Panc1 (cell line): ENCODE measurements at regions of chr5 and their contacts with region 1.

Region 1: GRCh38 chr5:173907686-173908371 is 19.7 kb downstream of the CPEB4 start:
- DNase-seq: no peak
- ATAC-seq: no peak
- H3K4me3 ChIP-seq: no peak overlapping the region
- H3K27ac ChIP-seq: no peak overlapping the region
- H3K4me1 ChIP-seq: no peaks in the 10 kb centered on the region
- H3K27me3 ChIP-seq: no peaks in the 10 kb centered on the region
- CTCF ChIP-seq: no peak

Region 2: DNA sequence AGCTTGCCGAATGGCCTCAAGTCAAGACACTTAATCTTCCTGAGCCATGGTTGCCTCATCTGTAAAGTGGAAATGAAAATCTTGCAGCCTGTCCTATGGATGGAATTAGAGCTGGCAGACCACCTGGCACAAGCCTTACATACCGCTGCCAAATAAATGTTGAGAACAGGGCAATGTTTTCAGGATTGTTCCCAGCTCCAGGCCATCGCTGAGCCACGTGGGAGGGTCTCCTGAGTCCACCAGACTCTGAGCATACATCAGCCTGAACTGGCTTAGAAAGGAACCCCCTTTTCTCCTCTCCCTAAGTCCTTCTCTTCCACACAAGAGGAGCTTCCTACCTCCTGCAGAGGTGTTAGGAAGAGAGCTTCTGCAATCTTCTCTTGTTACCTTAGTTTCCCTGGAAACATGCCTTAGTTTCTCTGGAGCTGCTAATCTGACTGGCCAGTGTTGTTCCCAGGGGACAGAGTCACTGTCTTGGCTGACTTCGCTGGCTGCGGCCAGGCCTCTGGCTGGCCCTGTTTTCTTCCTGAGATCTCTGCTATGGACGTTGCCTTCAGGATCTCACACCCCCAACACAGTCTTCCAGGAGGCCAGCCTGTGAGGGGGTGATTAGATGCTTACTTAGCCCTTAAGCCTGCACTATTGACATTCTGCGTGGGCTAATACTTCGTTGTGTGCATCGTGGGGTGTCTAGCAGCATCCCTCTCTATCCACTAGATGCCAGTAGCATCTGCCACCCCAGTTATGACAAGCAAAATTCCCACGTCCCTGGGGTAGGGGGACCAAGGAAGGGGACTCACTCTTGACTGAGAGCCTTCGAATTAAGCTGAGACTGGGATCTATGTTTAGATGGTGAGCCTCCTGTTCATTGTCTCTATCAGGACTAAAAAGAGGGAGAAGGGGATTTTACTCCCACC is 353.5 kb before region 1 on chr5:
- CTCF ChIA-PET with region 1: no interaction called
- POLR2A ChIA-PET with region 1: no interaction called
- in situ Hi-C with region 1: no loop called
- intact Hi-C with region 1: no loop called
- DNase-seq: no peak
- ATAC-seq: no peak
- H3K4me3 ChIP-seq: no peak overlapping the region
- H3K27ac ChIP-seq: no peak overlapping the region
- H3K4me1 ChIP-seq: no peaks in the 10 kb centered on the region
- H3K27me3 ChIP-seq: no peaks in the 10 kb centered on the region; the same call in 1 of the 2 replicates
- CTCF ChIP-seq: no peak

Region 3: DNA sequence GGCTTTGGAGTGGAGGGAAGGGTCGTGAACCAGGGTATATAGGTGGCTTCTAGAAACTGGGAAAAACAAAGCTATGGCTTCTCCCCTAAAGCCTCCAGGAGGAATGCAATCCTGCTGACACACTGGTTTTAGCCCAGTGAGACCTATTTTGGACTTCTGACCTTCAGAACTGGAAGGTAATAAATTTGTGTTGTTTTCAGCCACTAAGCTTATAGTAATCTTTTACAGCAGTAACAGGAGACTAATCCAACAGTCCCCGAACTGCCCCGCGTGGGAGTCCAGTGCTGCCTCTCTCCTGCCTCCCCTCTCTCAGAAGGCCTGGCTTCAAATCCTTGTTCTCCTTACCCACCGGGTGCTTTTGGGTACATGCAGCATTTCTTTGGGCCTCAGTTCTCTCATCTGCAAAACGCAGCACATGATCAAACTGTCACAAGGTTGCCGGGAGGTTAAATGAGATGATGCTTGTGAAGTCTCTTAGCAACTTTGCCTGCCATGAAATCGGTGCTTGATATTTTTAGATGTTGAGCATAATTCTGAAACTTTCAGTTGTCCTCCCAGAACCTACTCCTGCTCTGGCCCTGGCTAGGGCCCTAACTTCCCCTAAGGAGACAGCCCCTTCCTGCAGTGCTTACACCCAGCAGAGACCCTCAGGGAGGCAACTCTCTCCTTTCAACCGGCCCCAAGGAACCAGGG is 164.0 kb before region 1 on chr5:
- CTCF ChIA-PET with region 1: no interaction called
- POLR2A ChIA-PET with region 1: interaction called, 10 read pairs
- in situ Hi-C with region 1: no loop called
- intact Hi-C with region 1: no loop called
- DNase-seq: no peak
- ATAC-seq: no peak
- H3K4me3 ChIP-seq: no peak overlapping the region
- H3K27ac ChIP-seq: no peak overlapping the region
- H3K4me1 ChIP-seq: no peaks in the 10 kb centered on the region
- H3K27me3 ChIP-seq: no peaks in the 10 kb centered on the region
- CTCF ChIP-seq: no peak

Region 4: DNA sequence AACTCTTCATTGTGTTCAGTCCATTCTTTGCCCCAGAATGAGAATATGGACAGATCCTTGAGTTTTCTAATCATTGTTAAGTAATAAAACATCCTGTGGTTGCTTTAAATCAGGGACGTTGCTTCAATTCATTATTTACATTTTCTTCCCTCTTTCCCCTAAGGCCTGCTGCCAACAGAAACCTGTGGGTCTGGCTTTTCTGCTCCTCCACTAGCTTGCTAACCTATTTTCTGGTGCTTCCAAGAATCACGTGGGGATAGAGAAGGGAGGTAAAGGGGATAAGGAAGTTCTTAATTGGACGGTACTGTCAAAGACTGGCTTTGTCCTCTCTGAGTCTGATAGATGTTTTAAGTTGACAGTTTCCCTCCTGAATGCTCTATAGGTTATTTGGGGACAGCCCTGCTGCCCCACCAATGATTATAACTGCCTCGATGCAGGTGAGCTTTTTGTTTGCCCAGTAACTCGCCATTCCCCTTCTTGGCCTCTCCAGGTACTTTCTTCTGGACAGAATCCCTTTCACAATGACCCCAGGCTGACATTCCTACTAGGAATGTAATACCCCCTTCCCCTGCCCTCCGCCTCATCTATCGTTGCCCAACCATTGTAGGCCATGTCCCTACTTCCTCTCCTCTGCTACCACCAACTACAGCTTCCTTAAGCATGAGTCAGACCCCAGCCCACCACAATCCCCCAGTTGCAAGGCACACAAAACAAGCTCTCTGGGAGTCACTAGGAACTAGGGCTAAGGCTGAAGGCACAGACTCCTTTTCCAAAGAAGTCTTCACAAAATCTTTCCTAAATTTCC is 39.6 kb before region 1 on chr5:
- CTCF ChIA-PET with region 1: no interaction called
- POLR2A ChIA-PET with region 1: no interaction called
- in situ Hi-C with region 1: no loop called
- intact Hi-C with region 1: no loop called
- DNase-seq: no peak
- ATAC-seq: no peak
- H3K4me3 ChIP-seq: no peak overlapping the region
- H3K27ac ChIP-seq: no peak overlapping the region
- H3K4me1 ChIP-seq: no peaks in the 10 kb centered on the region
- H3K27me3 ChIP-seq: no peaks in the 10 kb centered on the region
- CTCF ChIP-seq: no peak

Region 5: GRCh38 chr5:174020397-174021296 is 112.8 kb after region 1 on chr5:
- CTCF ChIA-PET with region 1: no interaction called
- POLR2A ChIA-PET with region 1: no interaction called
- in situ Hi-C with region 1: no loop called
- intact Hi-C with region 1: no loop called
- DNase-seq: peak; percentile 45
- ATAC-seq: peak; percentile 90
- H3K4me3 ChIP-seq: no peak overlapping the region
- H3K27ac ChIP-seq: no peak overlapping the region
- H3K4me1 ChIP-seq: no peaks in the 10 kb centered on the region
- H3K27me3 ChIP-seq: peaks cover 22% of the 10 kb centered on the region
- CTCF ChIP-seq: peak; percentile 77